IMR-90 (cell line): ENCODE measurements at regions of chr1 and their contacts with region 1.

Region 1: GRCh38 chr1:101220906-101221305 is 15.9 kb upstream of the S1PR1 start:
- DNase-seq: no peak
- ATAC-seq: no peak
- H3K4me3 ChIP-seq: no peak overlapping the region
- H3K27ac ChIP-seq: no peak overlapping the region
- H3K4me1 ChIP-seq: no peaks in the 10 kb centered on the region
- H3K27me3 ChIP-seq: no peaks in the 10 kb centered on the region
- CTCF ChIP-seq: no peak
- POLR2A ChIP-seq: no peak
- RAD21 ChIP-seq: no peak

Region 2: GRCh38 chr1:100955322-100955721 is 265.6 kb before region 1 on chr1:
- CTCF ChIA-PET with region 1: no interaction called
- POLR2A ChIA-PET with region 1: no interaction called
- dilution Hi-C with region 1: no loop called
- in situ Hi-C with region 1: no loop called
- intact Hi-C with region 1: no loop called
- DNase-seq: peak; percentile 92
- ATAC-seq: peak; percentile 76
- H3K4me3 ChIP-seq: no peak overlapping the region
- H3K27ac ChIP-seq: peak overlapping the region; percentile 52; the same call in 1 of the 2 replicates
- H3K4me1 ChIP-seq: peaks cover 3% of the 10 kb centered on the region
- H3K27me3 ChIP-seq: no peaks in the 10 kb centered on the region
- CTCF ChIP-seq: no peak
- POLR2A ChIP-seq: no peak
- RAD21 ChIP-seq: no peak

Region 3: GRCh38 chr1:101150670-101151069 is 70.2 kb before region 1 on chr1:
- CTCF ChIA-PET with region 1: no interaction called
- POLR2A ChIA-PET with region 1: no interaction called
- dilution Hi-C with region 1: no loop called
- in situ Hi-C with region 1: no loop called
- intact Hi-C with region 1: no loop called
- DNase-seq: peak; percentile 41
- ATAC-seq: peak; percentile 35; the same call in 1 of the 2 replicates
- H3K4me3 ChIP-seq: no peak overlapping the region
- H3K27ac ChIP-seq: no peak overlapping the region
- H3K4me1 ChIP-seq: 0 out of 2 replicates have a peak, but pooled peaks cover 2% of the 10 kb centered on the region
- H3K27me3 ChIP-seq: no peaks in the 10 kb centered on the region
- CTCF ChIP-seq: no peak
- POLR2A ChIP-seq: no peak
- RAD21 ChIP-seq: no peak

Region 4: DNA sequence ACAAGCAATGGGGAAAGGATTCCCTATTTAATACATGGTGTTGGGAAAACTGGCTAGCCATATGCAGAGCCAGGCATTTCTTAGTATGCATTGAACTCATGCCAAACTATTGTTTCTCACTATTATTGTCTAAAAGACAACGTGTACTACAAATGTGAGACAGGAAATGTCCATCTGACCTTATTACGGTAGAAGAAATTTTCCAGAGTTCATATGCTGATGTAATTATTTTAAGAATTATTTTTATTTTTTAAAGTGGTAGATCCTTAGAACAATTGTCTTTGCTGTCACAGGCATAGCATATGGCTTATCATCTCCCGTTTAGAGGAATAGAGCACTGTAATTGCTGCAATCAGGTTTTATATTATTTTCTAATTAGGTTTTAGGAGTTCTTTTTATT is 59.3 kb before region 1 on chr1:
- CTCF ChIA-PET with region 1: no interaction called
- POLR2A ChIA-PET with region 1: no interaction called
- dilution Hi-C with region 1: no loop called
- in situ Hi-C with region 1: no loop called
- intact Hi-C with region 1: no loop called
- DNase-seq: no peak
- ATAC-seq: no peak
- H3K4me3 ChIP-seq: no peak overlapping the region
- H3K27ac ChIP-seq: no peak overlapping the region
- H3K4me1 ChIP-seq: peaks cover 3% of the 10 kb centered on the region; the same call in 1 of the 2 replicates
- H3K27me3 ChIP-seq: no peaks in the 10 kb centered on the region
- CTCF ChIP-seq: no peak
- POLR2A ChIP-seq: no peak
- RAD21 ChIP-seq: no peak

Region 5: DNA sequence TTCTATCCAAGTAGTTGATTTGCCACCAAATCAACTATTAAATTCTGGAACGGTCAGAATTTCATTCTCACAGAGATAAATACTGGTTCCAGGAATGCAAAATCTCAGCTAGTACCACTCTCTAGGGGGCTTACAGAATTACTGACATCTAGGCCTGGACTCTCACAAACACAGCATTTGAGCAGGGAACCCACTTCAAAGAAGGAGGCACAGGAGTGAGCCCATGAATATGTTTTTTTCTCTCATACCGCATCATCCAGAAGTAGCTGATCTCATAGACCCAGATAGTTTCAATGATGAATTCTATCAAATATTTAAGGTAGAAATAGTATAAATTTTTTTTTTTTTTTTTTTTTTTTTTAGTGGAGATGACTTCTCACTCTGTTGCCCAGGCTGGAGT is 48.0 kb after region 1 on chr1:
- CTCF ChIA-PET with region 1: no interaction called
- POLR2A ChIA-PET with region 1: interaction called, 20 read pairs
- dilution Hi-C with region 1: no loop called
- in situ Hi-C with region 1: no loop called
- intact Hi-C with region 1: no loop called
- DNase-seq: no peak
- ATAC-seq: no peak
- H3K4me3 ChIP-seq: no peak overlapping the region
- H3K27ac ChIP-seq: no peak overlapping the region
- H3K4me1 ChIP-seq: no peaks in the 10 kb centered on the region
- H3K27me3 ChIP-seq: no peaks in the 10 kb centered on the region
- CTCF ChIP-seq: no peak
- POLR2A ChIP-seq: no peak
- RAD21 ChIP-seq: no peak

Region 6: DNA sequence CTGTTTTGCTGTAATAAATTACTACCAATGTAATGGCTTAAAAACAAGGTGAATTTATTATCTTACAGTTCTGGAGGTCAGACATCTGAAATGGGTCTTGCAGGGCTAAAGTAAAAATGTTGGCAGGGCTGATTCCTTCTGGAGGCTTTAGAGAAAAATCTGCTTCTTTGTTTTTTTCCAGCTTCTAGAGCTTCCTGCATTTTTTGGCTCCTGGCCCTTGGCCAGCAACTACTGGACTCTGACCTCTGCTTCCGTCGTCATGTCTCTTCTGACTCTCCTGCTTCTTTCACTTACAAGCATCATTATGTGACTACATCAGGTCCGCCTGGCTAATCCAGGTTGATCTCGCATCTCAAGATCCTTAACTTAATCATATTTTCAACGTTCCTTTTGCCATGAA is 366.8 kb after region 1 on chr1:
- CTCF ChIA-PET with region 1: no interaction called
- POLR2A ChIA-PET with region 1: no interaction called
- dilution Hi-C with region 1: no loop called
- in situ Hi-C with region 1: no loop called
- intact Hi-C with region 1: no loop called
- DNase-seq: peak; percentile 1
- ATAC-seq: no peak
- H3K4me3 ChIP-seq: no peak overlapping the region
- H3K27ac ChIP-seq: no peak overlapping the region
- H3K4me1 ChIP-seq: no peaks in the 10 kb centered on the region
- H3K27me3 ChIP-seq: no peaks in the 10 kb centered on the region
- CTCF ChIP-seq: no peak
- POLR2A ChIP-seq: no peak
- RAD21 ChIP-seq: no peak